ENCODE measurements at regions of chr7 and their contacts with region 1.

Region 1: DNA sequence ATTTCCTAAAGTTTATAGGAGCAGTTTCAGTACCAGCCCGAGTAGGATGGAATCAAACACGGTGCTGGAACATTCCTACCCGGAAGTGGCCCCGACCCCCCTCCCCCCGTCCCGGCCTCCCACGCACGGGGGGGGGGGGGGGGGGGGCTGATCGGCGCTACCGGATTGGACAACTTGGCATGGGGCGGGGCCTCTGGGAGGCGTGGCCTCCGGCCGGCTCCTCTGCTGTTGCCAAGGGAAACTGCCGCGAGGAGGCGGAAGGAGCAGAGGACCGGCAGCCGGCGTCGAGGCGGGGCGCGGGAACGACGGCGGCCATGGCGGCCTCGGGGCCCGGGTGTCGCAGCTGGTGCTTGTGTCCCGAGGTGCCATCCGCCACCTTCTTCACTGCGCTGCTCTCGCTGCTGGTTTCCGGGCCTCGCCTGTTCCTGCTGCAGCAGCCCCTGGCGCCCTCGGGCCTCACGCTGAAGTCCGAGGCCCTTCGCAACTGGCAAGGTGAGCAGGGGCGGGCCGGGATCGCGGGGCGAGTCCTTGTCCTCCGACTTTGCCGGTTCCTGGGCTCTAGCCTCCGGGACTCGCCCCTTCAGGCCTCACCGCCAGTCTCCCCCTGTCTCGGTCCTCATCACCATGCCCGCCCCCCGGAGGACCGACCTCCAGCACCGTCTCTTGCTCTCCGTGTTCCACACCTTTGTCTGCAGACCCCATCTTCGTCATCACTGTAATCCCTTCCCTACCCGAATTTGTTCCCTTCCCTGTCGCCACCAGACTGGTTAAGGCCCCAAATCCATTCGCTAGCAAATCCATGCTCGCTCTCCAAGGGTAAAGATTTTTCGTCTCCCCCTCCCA is at the start of gene RHBDD2:
- DNase-seq: peak; percentile 86 to 96 (median 91)
- ATAC-seq: peak; percentile 96
- H3K4me3 ChIP-seq: peak within 1 kb of the TSS; percentile 94
- H3K4me3 Mint-ChIP-seq: peak within 1 kb of the TSS; percentile 93 to 99 (median 98)
- H3K27ac ChIP-seq: peak within 1 kb of the TSS; percentile 95
- H3K27ac Mint-ChIP-seq: peak within 1 kb of the TSS; percentile 91 to 99 (median 97)
- H3K4me1 ChIP-seq: peaks cover 16 to 20% of the 10 kb centered on the region in 2 donors
- H3K4me1 Mint-ChIP-seq: peaks cover 26 to 43% (median 34%) of the 10 kb centered on the region in 7 donors
- H3K27me3 ChIP-seq: no peaks in the 10 kb centered on the region
- H3K27me3 Mint-ChIP-seq: no peaks in the 10 kb centered on the region
- total RNA-seq, gene RHBDD2: 36.2 to 95.1 (median 47.8) TPM

Region 2: DNA sequence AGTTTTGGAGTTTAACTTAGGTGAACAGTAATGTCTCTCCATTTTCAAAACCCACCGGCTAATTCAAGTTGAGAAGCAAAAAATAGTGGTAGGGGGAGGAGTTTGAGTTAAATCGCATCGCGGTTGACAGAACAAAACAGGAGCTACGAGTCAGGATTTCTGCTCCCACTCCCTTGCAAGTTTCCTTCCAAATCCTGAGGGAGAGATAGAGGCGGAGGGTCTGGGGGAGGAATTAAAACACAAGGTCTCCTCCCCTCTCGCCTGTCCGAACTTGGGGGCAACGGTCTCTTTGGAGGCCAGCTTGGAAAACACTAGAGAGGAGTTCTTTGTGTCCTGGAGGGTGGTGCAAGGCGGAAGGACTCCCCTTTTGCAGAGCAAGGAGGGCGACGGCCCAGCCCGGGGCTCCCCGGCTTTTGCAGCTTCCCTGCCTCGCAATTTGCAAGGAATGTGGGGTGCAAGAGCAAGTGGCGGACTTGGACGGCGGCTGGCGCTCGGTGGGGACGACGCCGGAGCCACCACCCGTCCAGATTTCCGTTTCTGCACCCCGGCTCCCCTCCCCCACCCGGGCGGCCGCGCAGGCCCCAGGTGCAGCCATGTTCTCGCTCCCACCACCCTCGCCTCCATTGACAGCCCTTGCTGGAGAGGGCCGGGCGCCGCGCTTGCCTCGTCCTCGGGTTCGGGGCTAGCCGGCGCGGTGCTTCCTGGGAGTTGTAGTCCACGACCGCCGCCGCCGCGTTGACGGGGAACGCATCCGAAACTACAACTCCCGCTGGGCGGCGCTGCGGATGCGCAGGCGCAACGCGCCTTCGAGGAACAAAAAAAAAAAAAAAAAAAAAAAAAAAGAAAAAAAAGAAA is 1221.9 kb before region 1 on chr7:
- CTCF ChIA-PET with region 1: no interaction called
- POLR2A ChIA-PET with region 1: no interaction called
- intact Hi-C with region 1: loop called in 1 of 2 experiments (anchors 2 kb)
- DNase-seq: peak; percentile 94 to 97 (median 97)
- ATAC-seq: peak; percentile 88
- H3K4me3 ChIP-seq: peak overlapping the region; percentile 96
- H3K4me3 Mint-ChIP-seq: peak overlapping the region; percentile 90 to 97 (median 94)
- H3K27ac ChIP-seq: peak overlapping the region; percentile 89
- H3K27ac Mint-ChIP-seq: peak overlapping the region; percentile 86 to 98 (median 94)
- H3K4me1 ChIP-seq: peaks cover 12 to 21% of the 10 kb centered on the region in 2 donors
- H3K4me1 Mint-ChIP-seq: peaks cover 35 to 55% (median 43%) of the 10 kb centered on the region in 7 donors
- H3K27me3 ChIP-seq: no peaks in the 10 kb centered on the region
- H3K27me3 Mint-ChIP-seq: peaks cover 0 to 2% (median 0%) of the 10 kb centered on the region in 5 donors

Region 3: DNA sequence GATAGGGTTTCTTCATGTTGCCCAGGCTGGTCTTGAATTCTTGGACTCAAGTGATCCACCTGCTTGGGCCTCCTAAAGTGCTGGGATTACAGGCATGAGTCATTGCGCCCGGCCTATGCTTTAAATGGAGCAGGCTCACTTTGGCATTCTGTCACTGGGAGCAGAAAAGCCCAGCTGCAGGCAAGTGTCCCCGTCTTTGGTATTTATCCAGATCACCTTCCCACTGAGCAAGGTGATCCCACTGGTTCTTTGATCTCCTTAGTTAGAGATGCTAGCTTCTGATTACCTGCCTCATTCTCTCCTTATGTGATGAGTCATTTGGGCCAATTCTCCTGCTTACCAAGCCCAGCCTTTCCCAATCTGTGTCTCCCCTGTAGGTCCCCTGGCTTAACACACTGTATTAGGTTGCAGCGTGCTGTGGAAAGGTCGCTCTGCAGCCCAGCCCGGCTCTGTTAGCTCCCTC is 347.6 kb before region 1 on chr7:
- CTCF ChIA-PET with region 1: no interaction called
- POLR2A ChIA-PET with region 1: no interaction called
- intact Hi-C with region 1: loop called in 1 of 2 experiments (anchors 5 kb)
- DNase-seq: no peak
- ATAC-seq: no peak
- H3K4me3 ChIP-seq: no peak overlapping the region
- H3K4me3 Mint-ChIP-seq: no peak overlapping the region
- H3K27ac ChIP-seq: no peak overlapping the region
- H3K27ac Mint-ChIP-seq: peak overlapping the region in 1 of 9 donors; percentile 47
- H3K4me1 ChIP-seq: peaks cover 2 to 8% of the 10 kb centered on the region in 2 donors
- H3K4me1 Mint-ChIP-seq: peaks cover 14 to 19% (median 15%) of the 10 kb centered on the region in 7 donors
- H3K27me3 ChIP-seq: no peaks in the 10 kb centered on the region
- H3K27me3 Mint-ChIP-seq: no peaks in the 10 kb centered on the region

Region 4: GRCh38 chr7:75914730-75915585 is 36.0 kb after region 1 on chr7 and contains the start of gene POR:
- CTCF ChIA-PET with region 1: interaction called, 3 read pairs
- POLR2A ChIA-PET with region 1: interaction called, 52 read pairs
- intact Hi-C with region 1: loop called (anchors 1 kb)
- DNase-seq: peak; percentile 93 to 100 (median 99)
- ATAC-seq: peak; percentile 99
- H3K4me3 ChIP-seq: peak within 1 kb of the TSS; percentile 79
- H3K4me3 Mint-ChIP-seq: peak within 1 kb of the TSS; percentile 91 to 94 (median 92)
- H3K27ac ChIP-seq: peak within 1 kb of the TSS; percentile 100
- H3K27ac Mint-ChIP-seq: peak within 1 kb of the TSS; percentile 94 to 99 (median 98)
- H3K4me1 ChIP-seq: peaks cover 12 to 19% of the 10 kb centered on the region in 2 donors
- H3K4me1 Mint-ChIP-seq: peaks cover 18 to 50% (median 35%) of the 10 kb centered on the region in 7 donors
- H3K27me3 ChIP-seq: no peaks in the 10 kb centered on the region
- H3K27me3 Mint-ChIP-seq: peaks cover 0 to 3% (median 0%) of the 10 kb centered on the region in 5 donors
- total RNA-seq, gene POR: 45.9 to 72.3 (median 69.7) TPM

Region 5: GRCh38 chr7:76008156-76008687 is 129.2 kb after region 1 on chr7:
- CTCF ChIA-PET with region 1: no interaction called
- POLR2A ChIA-PET with region 1: interaction called, 4 read pairs
- intact Hi-C with region 1: loop called in 1 of 2 experiments (anchors 5 kb)
- DNase-seq: peak in 1 of 9 donors; percentile 38
- ATAC-seq: no peak
- H3K4me3 ChIP-seq: no peak overlapping the region
- H3K4me3 Mint-ChIP-seq: peak overlapping the region in 8 of 10 donors; percentile 1 to 85 (median 65)
- H3K27ac ChIP-seq: no peak overlapping the region
- H3K27ac Mint-ChIP-seq: peak overlapping the region in 6 of 9 donors; percentile 6 to 91 (median 58)
- H3K4me1 ChIP-seq: peaks cover 15 to 25% of the 10 kb centered on the region in 2 donors
- H3K4me1 Mint-ChIP-seq: peaks cover 22 to 37% (median 29%) of the 10 kb centered on the region in 7 donors
- H3K27me3 ChIP-seq: no peaks in the 10 kb centered on the region
- H3K27me3 Mint-ChIP-seq: peaks cover 0 to 2% (median 0%) of the 10 kb centered on the region in 5 donors

Region 6: DNA sequence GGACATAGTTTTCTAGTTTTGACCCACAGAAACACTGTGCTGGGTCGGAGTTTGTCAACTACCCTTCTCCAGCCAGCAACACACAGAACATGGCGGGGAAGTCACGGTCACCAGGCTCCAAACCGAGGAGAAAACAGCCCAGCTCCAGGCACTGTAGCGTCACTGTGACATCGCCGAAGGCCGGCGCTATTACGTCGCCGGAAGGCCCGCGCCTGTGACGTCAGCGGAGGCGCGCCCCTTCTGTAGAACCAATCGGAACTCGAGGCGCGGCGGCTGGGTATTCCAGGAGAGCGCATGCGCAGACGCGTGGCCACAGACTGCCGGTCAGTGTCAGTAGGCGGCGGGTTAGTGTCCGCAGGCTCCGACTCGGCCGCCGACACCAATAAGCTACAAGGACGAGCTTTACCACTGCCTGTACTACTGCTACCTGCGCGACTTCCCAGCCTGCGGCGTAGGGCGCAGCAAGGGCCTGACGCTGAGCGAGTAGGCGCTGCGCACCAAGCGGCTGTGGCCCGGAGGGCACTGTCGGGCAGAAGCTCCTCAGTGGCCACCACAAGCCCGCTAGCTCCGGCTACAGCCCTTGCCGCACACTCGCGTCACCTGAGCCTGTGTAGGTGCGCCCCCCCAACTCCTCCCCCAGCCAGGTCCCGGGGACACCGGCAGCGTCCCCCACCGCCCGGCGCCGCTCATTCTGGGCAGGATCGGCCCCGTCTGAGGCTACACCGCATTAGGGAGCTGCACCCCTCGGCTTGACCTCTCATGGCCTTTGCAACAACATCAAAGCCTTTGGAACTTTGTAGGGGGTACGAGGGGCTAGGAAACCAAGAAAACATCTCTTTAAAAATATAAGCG is 287.6 kb after region 1 on chr7:
- CTCF ChIA-PET with region 1: no interaction called
- POLR2A ChIA-PET with region 1: no interaction called
- intact Hi-C with region 1: loop called (anchors 1 to 2 kb)
- DNase-seq: peak; percentile 90 to 95 (median 94)
- ATAC-seq: peak; percentile 96
- H3K4me3 ChIP-seq: peak overlapping the region; percentile 96
- H3K4me3 Mint-ChIP-seq: peak overlapping the region; percentile 84 to 92 (median 90)
- H3K27ac ChIP-seq: peak overlapping the region; percentile 84
- H3K27ac Mint-ChIP-seq: peak overlapping the region; percentile 79 to 99 (median 97)
- H3K4me1 ChIP-seq: peaks cover 0 to 4% of the 10 kb centered on the region in 2 donors
- H3K4me1 Mint-ChIP-seq: peaks cover 0 to 14% (median 6%) of the 10 kb centered on the region in 7 donors
- H3K27me3 ChIP-seq: no peaks in the 10 kb centered on the region
- H3K27me3 Mint-ChIP-seq: no peaks in the 10 kb centered on the region

Region 7: GRCh38 chr7:76314042-76314721 is 435.2 kb after region 1 on chr7:
- CTCF ChIA-PET with region 1: no interaction called
- POLR2A ChIA-PET with region 1: no interaction called
- intact Hi-C with region 1: loop called in 1 of 2 experiments (anchors 2 kb)
- DNase-seq: peak; percentile 90 to 97 (median 93)
- ATAC-seq: peak; percentile 85
- H3K4me3 ChIP-seq: no peak overlapping the region
- H3K4me3 Mint-ChIP-seq: peak overlapping the region in 4 of 10 donors; percentile 33 to 70 (median 60)
- H3K27ac ChIP-seq: no peak overlapping the region
- H3K27ac Mint-ChIP-seq: peak overlapping the region in 3 of 9 donors; percentile 8 to 86 (median 64)
- H3K4me1 ChIP-seq: peaks cover 11 to 12% of the 10 kb centered on the region in 2 donors
- H3K4me1 Mint-ChIP-seq: peaks cover 13 to 27% (median 23%) of the 10 kb centered on the region in 7 donors
- H3K27me3 ChIP-seq: no peaks in the 10 kb centered on the region
- H3K27me3 Mint-ChIP-seq: no peaks in the 10 kb centered on the region